ENCODE measurements at regions of chr6 and their contacts with region 1.

Region 1: DNA sequence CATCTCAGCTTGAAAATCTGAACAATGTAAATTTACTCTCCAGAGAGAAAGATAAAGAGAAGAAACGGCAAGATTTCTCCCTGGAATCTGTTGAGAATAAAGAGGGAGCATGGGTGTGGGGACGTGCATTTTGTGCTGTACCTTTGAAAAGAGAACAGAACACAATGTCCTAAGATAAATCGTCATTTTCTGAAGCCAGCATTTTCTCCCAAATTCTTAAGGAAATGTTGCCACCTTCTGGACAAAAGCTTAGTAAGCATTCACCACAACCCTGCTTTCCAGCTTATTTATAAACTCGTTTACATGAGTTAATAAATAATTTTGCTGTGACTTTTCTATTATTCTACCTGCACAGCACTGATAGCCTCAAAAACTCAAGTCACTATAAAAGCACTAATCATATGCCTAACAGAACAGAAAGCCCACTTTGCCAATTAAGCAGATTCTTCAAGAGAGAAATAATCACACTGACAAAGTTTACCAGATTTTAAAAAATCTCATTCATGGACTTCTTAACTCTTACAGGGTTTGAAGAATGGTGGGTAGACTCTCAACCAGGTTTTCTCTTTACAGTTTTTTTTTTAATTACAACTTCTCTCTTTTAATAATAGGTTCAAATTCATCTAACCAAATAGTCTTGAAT is 155.8 kb downstream of the MBOAT1 start:
- DNase-seq: peak; percentile 47
- CTCF ChIP-seq: peak; percentile 20

Region 2: DNA sequence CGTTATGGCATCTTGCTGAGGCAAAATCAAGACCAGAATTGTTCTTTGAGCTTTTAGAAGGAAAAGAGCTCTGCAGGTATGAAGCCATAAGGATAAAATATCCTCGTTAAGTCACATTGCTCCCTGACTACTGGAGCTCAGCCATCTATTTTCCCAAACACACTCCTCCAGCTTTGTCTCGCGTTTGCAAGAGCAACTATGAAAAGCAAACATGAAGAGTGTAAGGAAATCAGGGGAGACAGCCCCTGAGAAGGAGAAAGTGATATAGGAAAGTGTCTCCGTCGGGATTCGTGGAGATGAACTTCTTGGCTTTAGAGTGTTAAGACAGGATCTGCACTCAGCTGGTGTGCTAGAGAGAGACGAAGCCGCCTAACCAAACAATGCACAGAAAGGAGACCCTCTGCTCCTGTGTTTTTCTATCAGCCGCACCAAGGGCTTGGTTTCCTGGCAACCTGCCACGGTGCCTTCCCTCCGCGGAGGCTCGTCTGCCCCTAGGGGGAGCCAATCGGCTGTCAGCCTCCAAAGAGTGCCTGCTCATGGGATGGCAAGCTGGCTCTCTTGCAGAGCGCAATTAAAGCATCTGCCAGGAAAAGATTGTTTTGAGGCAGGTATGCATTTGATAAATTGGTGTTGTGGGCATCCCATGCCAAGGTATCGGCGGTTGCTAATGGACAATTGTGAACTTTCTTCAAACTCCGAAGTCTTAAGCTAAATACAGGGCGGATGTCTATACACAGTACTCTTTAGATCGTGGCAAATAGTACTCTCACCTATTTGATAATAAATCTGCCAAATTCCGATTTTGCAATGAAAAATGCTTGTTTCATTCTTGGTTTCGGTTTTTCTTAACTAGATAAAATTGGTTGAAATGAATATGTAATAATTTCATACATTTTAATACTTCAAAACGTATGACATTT is 1066.2 kb before region 1 on chr6:
- in situ Hi-C with region 1: loop called (anchors 25 kb)
- DNase-seq: peak; percentile 34
- CTCF ChIP-seq: peak; percentile 26